PC-9 (cell line): ENCODE measurements at regions of chr3 and their contacts with region 1.

Region 1: DNA sequence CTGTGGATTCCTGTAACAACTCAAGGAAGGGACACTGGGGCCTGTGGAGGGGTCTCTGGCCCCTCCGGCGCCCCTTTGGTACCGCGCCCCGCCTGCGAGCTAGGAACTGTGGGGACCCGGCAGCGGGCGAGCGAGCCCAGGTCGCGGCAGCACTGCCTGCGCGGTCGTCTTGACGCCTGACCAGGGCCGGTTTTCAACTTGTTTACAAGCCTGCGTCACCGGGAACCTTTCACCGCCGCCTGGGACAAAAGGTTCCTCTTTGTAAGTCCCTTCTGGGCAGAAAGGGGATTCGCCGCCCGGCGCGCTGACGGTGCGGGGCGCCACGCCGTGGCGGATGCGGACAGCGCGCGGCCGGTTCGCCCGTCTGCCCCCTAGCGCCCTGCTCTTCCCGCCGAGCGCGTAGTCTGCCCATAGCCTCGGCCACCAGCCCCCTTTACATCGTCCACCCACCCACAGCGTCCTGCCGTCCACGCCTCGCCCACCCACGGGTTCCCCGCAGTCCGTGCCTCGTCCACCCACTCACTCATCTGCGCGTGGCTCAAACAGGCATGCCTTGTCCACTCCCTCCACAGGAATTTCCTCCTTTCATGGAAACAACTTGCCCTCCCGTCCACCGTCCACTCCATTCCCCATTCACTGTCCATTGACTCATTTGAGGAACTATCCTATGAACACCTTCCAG is 5.5 kb upstream of the CFAP100 start:
- DNase-seq: peak; percentile 85 to 89
- H3K4me3 ChIP-seq: peak overlapping the region; percentile 60; the same call in 1 of the 2 replicates
- H3K27ac ChIP-seq: no peak overlapping the region
- H3K4me1 ChIP-seq: 0 out of 2 replicates have a peak, but pooled peaks cover 11% of the 10 kb centered on the region
- H3K27me3 ChIP-seq: no peaks in the 10 kb centered on the region
- CTCF ChIP-seq: peak; percentile 77

Region 2: GRCh38 chr3:125967138-125967537 is 422.1 kb before region 1 on chr3:
- CTCF ChIA-PET with region 1: no interaction called
- POLR2A ChIA-PET with region 1: no interaction called
- intact Hi-C with region 1: loop called (anchors 5 kb)
- DNase-seq: peak; percentile 19 to 80
- H3K4me3 ChIP-seq: no peak overlapping the region
- H3K27ac ChIP-seq: no peak overlapping the region
- H3K4me1 ChIP-seq: peaks cover 19% of the 10 kb centered on the region
- H3K27me3 ChIP-seq: peaks cover 4% of the 10 kb centered on the region; the same call in 1 of the 2 replicates
- CTCF ChIP-seq: no peak

Region 3: GRCh38 chr3:126134219-126134975 is 254.9 kb before region 1 on chr3:
- CTCF ChIA-PET with region 1: no interaction called
- POLR2A ChIA-PET with region 1: no interaction called
- intact Hi-C with region 1: loop called (anchors 1 kb)
- DNase-seq: peak in 1 of 2 experiments; percentile 56
- H3K4me3 ChIP-seq: no peak overlapping the region
- H3K27ac ChIP-seq: no peak overlapping the region
- H3K4me1 ChIP-seq: peaks cover 15% of the 10 kb centered on the region
- H3K27me3 ChIP-seq: no peaks in the 10 kb centered on the region
- CTCF ChIP-seq: peak; percentile 85

Region 4: GRCh38 chr3:126197854-126198584 is 191.2 kb before region 1 on chr3:
- CTCF ChIA-PET with region 1: interaction called, 15 read pairs
- POLR2A ChIA-PET with region 1: interaction called, 10 read pairs
- intact Hi-C with region 1: loop called (anchors 1 kb)
- DNase-seq: peak; percentile 87 to 90
- H3K4me3 ChIP-seq: peak overlapping the region; percentile 59
- H3K27ac ChIP-seq: peak overlapping the region; percentile 83
- H3K4me1 ChIP-seq: 0 out of 2 replicates have a peak, but pooled peaks cover 5% of the 10 kb centered on the region
- H3K27me3 ChIP-seq: no peaks in the 10 kb centered on the region
- CTCF ChIP-seq: peak; percentile 81

Region 5: GRCh38 chr3:126245811-126246727 is 143.2 kb before region 1 on chr3:
- CTCF ChIA-PET with region 1: no interaction called
- POLR2A ChIA-PET with region 1: no interaction called
- intact Hi-C with region 1: loop called (anchors 2 kb)
- DNase-seq: peak in 1 of 2 experiments; percentile 34
- H3K4me3 ChIP-seq: no peak overlapping the region
- H3K27ac ChIP-seq: no peak overlapping the region
- H3K4me1 ChIP-seq: no peaks in the 10 kb centered on the region
- H3K27me3 ChIP-seq: no peaks in the 10 kb centered on the region
- CTCF ChIP-seq: peak; percentile 67

Region 6: GRCh38 chr3:126267226-126267975 is 121.9 kb before region 1 on chr3:
- CTCF ChIA-PET with region 1: no interaction called
- POLR2A ChIA-PET with region 1: no interaction called
- intact Hi-C with region 1: loop called (anchors 1 kb)
- DNase-seq: peak; percentile 63 to 92
- H3K4me3 ChIP-seq: peak overlapping the region; percentile 51; the same call in 1 of the 2 replicates
- H3K27ac ChIP-seq: no peak overlapping the region
- H3K4me1 ChIP-seq: no peaks in the 10 kb centered on the region
- H3K27me3 ChIP-seq: no peaks in the 10 kb centered on the region; the same call in 1 of the 2 replicates
- CTCF ChIP-seq: no peak

Region 7: DNA sequence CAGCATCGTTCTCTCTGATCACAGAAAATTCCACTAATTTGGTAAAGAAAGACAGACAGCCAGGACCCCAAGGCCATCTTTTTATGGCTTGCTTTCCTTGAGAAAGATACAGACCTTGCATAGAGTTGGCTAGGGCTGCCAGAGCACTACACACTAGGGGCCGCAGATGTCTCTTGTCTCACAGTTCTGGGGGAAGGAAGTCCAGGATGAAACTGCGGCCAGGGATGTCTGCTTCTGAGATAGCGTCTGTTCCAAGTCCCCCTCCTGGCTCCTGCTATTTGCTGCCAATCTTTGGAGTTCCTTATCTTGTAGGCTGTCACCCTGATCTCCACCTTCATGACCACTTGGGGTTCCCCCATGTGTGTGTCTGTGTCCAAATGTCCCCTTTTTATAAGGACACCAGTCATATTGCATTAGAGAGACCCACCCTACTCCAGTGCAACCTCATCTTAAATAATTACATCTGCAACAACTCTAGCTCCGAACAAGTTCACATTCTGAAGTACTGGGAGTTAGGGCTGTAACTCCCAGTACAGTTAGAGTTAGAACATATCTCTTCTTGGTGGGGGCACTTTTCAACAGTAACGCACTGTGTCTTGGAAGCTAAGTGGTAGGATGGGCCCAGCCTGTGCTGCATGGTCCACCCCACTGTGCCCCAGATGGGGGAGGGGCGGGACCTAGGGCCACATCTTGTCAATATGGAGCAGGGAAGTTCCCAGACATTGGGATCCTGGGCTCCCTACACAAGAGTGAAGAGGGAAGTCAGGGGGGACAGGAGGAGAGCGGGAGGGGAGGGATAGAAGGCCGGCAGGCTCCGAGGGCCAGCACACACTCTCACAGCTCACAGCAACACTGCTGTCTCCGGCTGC is 74.2 kb before region 1 on chr3:
- CTCF ChIA-PET with region 1: no interaction called
- POLR2A ChIA-PET with region 1: no interaction called
- intact Hi-C with region 1: no loop called
- DNase-seq: no peak
- H3K4me3 ChIP-seq: no peak overlapping the region
- H3K27ac ChIP-seq: no peak overlapping the region
- H3K4me1 ChIP-seq: no peaks in the 10 kb centered on the region
- H3K27me3 ChIP-seq: peaks cover 40% of the 10 kb centered on the region
- CTCF ChIP-seq: no peak